ENCODE measurements at regions of chr17 and their contacts with region 1.

Region 1: GRCh38 chr17:64145757-64146417 is 15.9 kb upstream of the ERN1 start:
- DNase-seq: peak; percentile 96 to 99 (median 98)
- ATAC-seq: peak; percentile 95 to 97 (median 96)
- H3K4me3 ChIP-seq: peak overlapping the region; percentile 58 to 97 (median 82)
- H3K27ac ChIP-seq: peak overlapping the region; percentile 90 to 100 (median 97)
- H3K4me1 ChIP-seq: peaks cover 0 to 41% (median 30%) of the 10 kb centered on the region in 12 donors
- H3K27me3 ChIP-seq: no peaks in the 10 kb centered on the region
- CTCF ChIP-seq: peak in 1 of 12 donors; percentile 5
- POLR2A ChIP-seq: peak; percentile 86 to 98

Region 2: GRCh38 chr17:64190488-64190887 is 44.6 kb after region 1 on chr17:
- intact Hi-C with region 1: loop called in 1 of 10 experiments (anchors 1 kb)
- DNase-seq: peak in 3 of 5 donors; percentile 36 to 54 (median 47)
- ATAC-seq: peak; percentile 42 to 87 (median 69)
- H3K4me3 ChIP-seq: no peak overlapping the region
- H3K27ac ChIP-seq: peak overlapping the region in 3 of 12 donors; percentile 1 to 43 (median 13)
- H3K4me1 ChIP-seq: peaks cover 0 to 40% (median 17%) of the 10 kb centered on the region in 12 donors
- H3K27me3 ChIP-seq: no peaks in the 10 kb centered on the region
- CTCF ChIP-seq: no peak
- POLR2A ChIP-seq: no peak

Region 3: GRCh38 chr17:64216338-64217248 is 70.7 kb after region 1 on chr17:
- intact Hi-C with region 1: loop called in 2 of 10 experiments (anchors 5 to 10 kb)
- DNase-seq: peak; percentile 37 to 64 (median 58)
- ATAC-seq: peak; percentile 62 to 78 (median 73)
- H3K4me3 ChIP-seq: no peak overlapping the region
- H3K27ac ChIP-seq: peak overlapping the region; percentile 47 to 85 (median 74)
- H3K4me1 ChIP-seq: peaks cover 10 to 62% (median 41%) of the 10 kb centered on the region in 12 donors
- H3K27me3 ChIP-seq: no peaks in the 10 kb centered on the region
- CTCF ChIP-seq: peak in 4 of 12 donors; percentile 9 to 32 (median 24)
- POLR2A ChIP-seq: no peak

Region 4: GRCh38 chr17:64262417-64263260 is 116.8 kb after region 1 on chr17 and contains the start of gene TEX2:
- intact Hi-C with region 1: loop called in 7 of 10 experiments (anchors 1 to 5 kb)
- DNase-seq: peak; percentile 56 to 81 (median 67)
- ATAC-seq: peak; percentile 30 to 70 (median 64)
- H3K4me3 ChIP-seq: peak within 1 kb of the TSS; percentile 86 to 100 (median 96)
- H3K27ac ChIP-seq: peak within 1 kb of the TSS; percentile 62 to 97 (median 93)
- H3K4me1 ChIP-seq: peaks cover 4 to 50% (median 33%) of the 10 kb centered on the region in 12 donors
- H3K27me3 ChIP-seq: no peaks in the 10 kb centered on the region
- CTCF ChIP-seq: no peak
- POLR2A ChIP-seq: peak; percentile 21 to 65
- total RNA-seq, gene TEX2: 42.2 to 55.8 (median 51.1) TPM